Ascending aorta (tissue), 2 donors: ENCODE measurements at regions of chr5 and their contacts with region 1.

Region 1: DNA sequence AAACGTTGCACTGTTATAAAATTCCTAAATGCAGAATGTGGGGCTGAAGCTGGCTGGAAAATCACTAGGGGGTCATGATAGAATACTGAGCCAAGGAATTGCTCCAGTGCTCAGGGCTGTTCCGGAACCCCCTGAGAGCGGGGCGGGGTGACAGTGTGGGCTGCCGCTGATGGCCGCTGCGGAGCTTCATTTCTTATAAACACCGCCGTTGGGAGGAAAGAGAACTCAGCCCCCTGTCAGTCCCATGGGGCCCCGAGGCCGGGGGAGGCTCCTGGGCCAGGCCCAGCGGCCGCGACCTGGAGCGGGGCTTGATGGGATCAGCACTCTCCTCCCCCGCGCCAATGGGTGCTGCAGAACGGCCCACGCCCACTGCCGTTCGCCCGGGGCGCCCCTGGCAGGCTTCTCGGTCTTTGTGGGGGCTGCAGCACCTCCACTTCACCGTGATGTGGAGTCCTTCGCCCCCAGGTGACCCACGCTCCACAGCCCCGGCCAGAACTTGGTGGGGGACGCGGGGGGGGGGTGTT is 5.2 kb upstream of the IRF1 start:
- DNase-seq: peak in 1 of 2 donors; percentile 92
- H3K4me3 ChIP-seq: peak overlapping the region; percentile 57 to 88
- H3K27ac ChIP-seq: peak overlapping the region; percentile 92 to 97
- H3K4me1 ChIP-seq: peaks cover 17 to 30% of the 10 kb centered on the region in 2 donors
- H3K27me3 ChIP-seq: no peaks in the 10 kb centered on the region
- CTCF ChIP-seq: no peak

Region 2: GRCh38 chr5:132251220-132251725 is 244.5 kb before region 1 on chr5:
- intact Hi-C with region 1: loop called (anchors 5 kb)
- DNase-seq: peak; percentile 70 to 92
- H3K4me3 ChIP-seq: no peak overlapping the region
- H3K27ac ChIP-seq: peak overlapping the region; percentile 80 to 88
- H3K4me1 ChIP-seq: peaks cover 5 to 23% of the 10 kb centered on the region in 2 donors
- H3K27me3 ChIP-seq: no peaks in the 10 kb centered on the region
- CTCF ChIP-seq: no peak

Region 3: GRCh38 chr5:132410451-132411381 is 85.0 kb before region 1 on chr5:
- intact Hi-C with region 1: loop called (anchors 1 kb)
- DNase-seq: peak; percentile 63 to 90
- H3K4me3 ChIP-seq: peak overlapping the region; percentile 88 to 96
- H3K27ac ChIP-seq: peak overlapping the region; percentile 97 to 100
- H3K4me1 ChIP-seq: peaks cover 0 to 43% of the 10 kb centered on the region in 2 donors
- H3K27me3 ChIP-seq: no peaks in the 10 kb centered on the region
- CTCF ChIP-seq: peak; percentile 46 to 65 (median 56)

Region 4: DNA sequence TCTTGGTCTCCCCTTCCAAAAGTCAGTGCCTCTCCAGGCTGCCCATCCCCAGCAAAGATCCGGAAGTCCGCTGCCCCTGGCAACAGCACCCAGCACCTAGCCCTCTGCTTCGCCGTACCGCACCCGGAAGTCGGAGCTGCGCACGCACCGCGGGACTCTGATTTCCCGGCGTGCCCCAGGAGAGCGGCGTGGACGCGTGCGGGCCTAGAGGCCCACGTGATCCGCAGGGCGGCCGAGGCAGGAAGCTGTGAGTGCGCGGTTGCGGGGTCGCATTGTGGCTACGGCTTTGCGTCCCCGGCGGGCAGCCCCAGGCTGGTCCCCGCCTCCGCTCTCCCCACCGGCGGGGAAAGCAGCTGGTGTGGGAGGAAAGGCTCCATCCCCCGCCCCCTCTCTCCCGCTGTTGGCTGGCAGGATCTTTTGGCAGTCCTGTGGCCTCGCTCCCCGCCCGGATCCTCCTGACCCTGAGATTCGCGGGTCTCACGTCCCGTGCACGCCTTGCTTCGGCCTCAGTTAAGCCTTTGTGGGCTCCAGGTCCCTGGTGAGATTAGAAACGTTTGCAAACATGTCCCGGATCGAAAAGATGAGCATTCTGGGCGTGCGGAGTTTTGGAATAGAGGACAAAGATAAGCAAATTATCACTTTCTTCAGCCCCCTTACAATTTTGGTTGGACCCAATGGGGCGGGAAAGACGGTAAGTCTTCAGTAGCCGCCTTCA is 61.2 kb after region 1 on chr5 and contains the start of gene RAD50:
- intact Hi-C with region 1: loop called (anchors 5 kb)
- DNase-seq: peak; percentile 79 to 96
- H3K4me3 ChIP-seq: peak within 1 kb of the TSS; percentile 73 to 95
- H3K27ac ChIP-seq: peak within 1 kb of the TSS; percentile 72 to 95
- H3K4me1 ChIP-seq: peaks cover 7 to 11% of the 10 kb centered on the region in 2 donors
- H3K27me3 ChIP-seq: no peaks in the 10 kb centered on the region
- CTCF ChIP-seq: no peak
- total RNA-seq, gene RAD50: 29.4 TPM

Region 5: DNA sequence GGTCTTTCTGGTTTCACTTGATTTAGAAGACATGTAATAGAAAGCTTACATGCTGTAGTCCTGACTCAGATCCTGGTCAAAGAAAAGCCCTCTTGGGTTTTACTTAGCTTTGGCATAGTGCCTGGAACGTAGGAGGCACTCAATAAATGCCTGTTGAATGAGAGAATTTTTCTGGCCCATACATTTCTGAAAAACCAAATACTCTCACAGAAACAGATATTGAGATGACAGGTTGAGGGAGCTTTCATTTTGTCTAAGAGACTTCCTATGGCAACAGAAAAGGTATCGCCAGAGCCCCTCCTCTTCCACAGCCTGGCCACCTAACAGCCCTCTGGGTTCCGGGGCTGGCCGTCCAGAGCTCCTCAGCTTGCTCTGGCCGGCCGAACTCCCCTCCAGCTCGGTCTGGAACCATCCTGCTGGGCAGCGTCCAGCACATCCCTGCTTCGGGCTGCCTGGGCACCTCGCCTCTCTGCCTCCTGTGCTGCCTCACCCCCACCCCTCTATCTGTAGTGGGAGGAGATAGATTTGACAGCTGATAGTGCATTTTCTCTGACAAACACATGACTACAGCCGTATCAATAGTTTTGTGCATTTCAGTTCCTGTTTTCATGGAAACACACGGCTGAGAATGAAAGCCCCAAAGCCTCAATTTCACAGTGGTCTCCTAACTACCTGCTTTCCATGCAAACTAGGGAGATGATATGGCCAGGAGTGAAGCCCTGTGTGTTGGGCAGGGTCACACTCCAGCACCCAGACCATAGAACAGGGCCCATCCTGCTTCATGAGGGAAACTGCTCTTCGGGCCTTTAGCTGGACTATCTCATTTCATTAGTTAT is 179.2 kb after region 1 on chr5:
- intact Hi-C with region 1: loop called (anchors 5 kb)
- DNase-seq: peak in 1 of 2 donors; percentile 73
- H3K4me3 ChIP-seq: peak overlapping the region; percentile 29 to 54
- H3K27ac ChIP-seq: peak overlapping the region; percentile 95 to 96
- H3K4me1 ChIP-seq: peaks cover 9 to 23% of the 10 kb centered on the region in 2 donors
- H3K27me3 ChIP-seq: no peaks in the 10 kb centered on the region
- CTCF ChIP-seq: no peak